ENCODE measurements at regions of chr2 and their contacts with region 1.

Region 1: DNA sequence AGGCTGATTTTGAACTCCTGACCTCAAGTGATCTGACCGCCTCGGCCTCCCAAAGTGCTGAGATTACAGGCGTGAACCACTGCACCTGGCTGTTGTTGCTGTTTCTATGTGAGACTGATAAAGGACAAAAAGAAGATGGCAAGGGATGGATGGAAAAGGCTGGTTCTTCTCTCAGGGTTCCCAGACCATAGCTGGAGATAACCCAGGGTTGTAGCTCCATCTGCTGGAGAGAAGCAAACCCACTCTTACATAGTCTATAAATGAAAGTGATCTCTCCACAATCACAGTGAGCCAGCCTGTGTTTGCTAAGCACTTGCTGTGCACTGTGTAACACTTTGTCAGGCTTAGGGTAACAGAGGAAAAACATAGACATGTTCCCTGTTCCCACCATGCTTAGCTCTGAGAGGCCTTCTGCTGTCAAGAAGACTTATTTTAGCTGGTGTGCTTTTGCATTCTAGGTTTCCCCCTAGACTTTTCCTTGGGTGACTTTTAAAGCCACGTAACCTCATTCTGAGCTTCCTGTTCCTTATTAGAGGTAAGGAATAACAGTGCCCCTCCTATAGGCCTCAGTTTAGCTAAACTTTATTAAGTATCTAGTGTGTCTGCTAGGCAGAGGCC is 49.7 kb downstream of the LIMS1 start:
- DNase-seq: peak in 8 of 9 donors; percentile 33 to 66 (median 52)
- ATAC-seq: peak; percentile 83
- H3K4me3 ChIP-seq: no peak overlapping the region
- H3K4me3 Mint-ChIP-seq: peak overlapping the region in 1 of 10 donors; percentile 32
- H3K27ac ChIP-seq: no peak overlapping the region
- H3K27ac Mint-ChIP-seq: no peak overlapping the region
- H3K4me1 ChIP-seq: peaks cover 0 to 3% of the 10 kb centered on the region in 2 donors
- H3K4me1 Mint-ChIP-seq: peaks cover 11 to 38% (median 18%) of the 10 kb centered on the region in 7 donors
- H3K27me3 ChIP-seq: no peaks in the 10 kb centered on the region
- H3K27me3 Mint-ChIP-seq: no peaks in the 10 kb centered on the region

Region 2: GRCh38 chr2:107430596-107431266 is 1153.3 kb before region 1 on chr2:
- CTCF ChIA-PET with region 1: no interaction called
- POLR2A ChIA-PET with region 1: no interaction called
- intact Hi-C with region 1: no loop called
- DNase-seq: no peak
- ATAC-seq: no peak
- H3K4me3 ChIP-seq: no peak overlapping the region
- H3K4me3 Mint-ChIP-seq: no peak overlapping the region
- H3K27ac ChIP-seq: no peak overlapping the region
- H3K27ac Mint-ChIP-seq: no peak overlapping the region
- H3K4me1 ChIP-seq: no peaks in the 10 kb centered on the region
- H3K4me1 Mint-ChIP-seq: no peaks in the 10 kb centered on the region
- H3K27me3 ChIP-seq: no peaks in the 10 kb centered on the region
- H3K27me3 Mint-ChIP-seq: no peaks in the 10 kb centered on the region

Region 3: DNA sequence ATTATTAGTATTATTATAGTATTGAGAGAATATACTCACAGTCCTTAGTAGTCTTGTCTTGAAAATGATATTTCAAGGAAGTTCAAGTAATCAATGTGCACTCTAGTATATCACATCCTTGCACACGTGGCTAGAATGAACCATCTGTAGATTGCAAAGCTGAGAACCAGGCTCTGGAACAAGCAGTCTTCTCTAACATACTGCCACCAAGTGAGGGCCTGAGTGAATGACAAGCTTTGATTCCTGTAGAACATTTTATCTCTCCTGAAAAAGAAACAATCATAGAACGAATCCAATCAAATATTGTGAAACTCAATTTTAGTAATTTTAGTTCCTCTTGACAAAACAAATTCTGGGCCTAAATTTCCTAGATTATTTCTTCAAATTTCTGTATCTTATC is 399.6 kb before region 1 on chr2:
- CTCF ChIA-PET with region 1: no interaction called
- POLR2A ChIA-PET with region 1: no interaction called
- intact Hi-C with region 1: loop called in 1 of 2 experiments (anchors 10 kb)
- DNase-seq: no peak
- ATAC-seq: no peak
- H3K4me3 ChIP-seq: no peak overlapping the region
- H3K4me3 Mint-ChIP-seq: no peak overlapping the region
- H3K27ac ChIP-seq: no peak overlapping the region
- H3K27ac Mint-ChIP-seq: no peak overlapping the region
- H3K4me1 ChIP-seq: no peaks in the 10 kb centered on the region
- H3K4me1 Mint-ChIP-seq: no peaks in the 10 kb centered on the region
- H3K27me3 ChIP-seq: no peaks in the 10 kb centered on the region
- H3K27me3 Mint-ChIP-seq: peaks cover 0 to 19% (median 6%) of the 10 kb centered on the region in 5 donors

Region 4: DNA sequence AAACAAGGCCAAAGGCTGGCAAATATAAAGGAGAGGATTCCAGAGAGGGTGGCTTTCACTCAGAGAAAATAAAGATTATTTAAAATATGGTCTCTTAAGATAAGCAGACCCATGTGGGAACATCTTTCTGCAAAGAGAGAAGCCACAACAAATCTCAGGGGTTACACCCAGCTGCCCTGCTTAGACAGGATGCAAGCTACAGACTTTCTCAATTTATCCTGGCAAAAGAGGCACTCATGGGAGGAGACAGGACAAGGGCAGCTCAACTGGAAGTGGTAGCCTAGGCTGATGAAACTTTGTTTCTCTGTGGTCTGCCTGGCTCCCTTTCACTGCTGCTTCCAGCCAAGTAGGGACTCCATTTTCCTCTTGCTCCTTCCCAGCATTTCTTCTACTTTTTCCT is 232.1 kb before region 1 on chr2:
- CTCF ChIA-PET with region 1: interaction called, 4 read pairs
- POLR2A ChIA-PET with region 1: no interaction called
- intact Hi-C with region 1: loop called in 1 of 2 experiments (anchors 1 kb)
- DNase-seq: no peak
- ATAC-seq: no peak
- H3K4me3 ChIP-seq: no peak overlapping the region
- H3K4me3 Mint-ChIP-seq: no peak overlapping the region
- H3K27ac ChIP-seq: no peak overlapping the region
- H3K27ac Mint-ChIP-seq: no peak overlapping the region
- H3K4me1 ChIP-seq: no peaks in the 10 kb centered on the region
- H3K4me1 Mint-ChIP-seq: no peaks in the 10 kb centered on the region
- H3K27me3 ChIP-seq: no peaks in the 10 kb centered on the region
- H3K27me3 Mint-ChIP-seq: peaks cover 0 to 18% (median 14%) of the 10 kb centered on the region in 5 donors

Region 5: DNA sequence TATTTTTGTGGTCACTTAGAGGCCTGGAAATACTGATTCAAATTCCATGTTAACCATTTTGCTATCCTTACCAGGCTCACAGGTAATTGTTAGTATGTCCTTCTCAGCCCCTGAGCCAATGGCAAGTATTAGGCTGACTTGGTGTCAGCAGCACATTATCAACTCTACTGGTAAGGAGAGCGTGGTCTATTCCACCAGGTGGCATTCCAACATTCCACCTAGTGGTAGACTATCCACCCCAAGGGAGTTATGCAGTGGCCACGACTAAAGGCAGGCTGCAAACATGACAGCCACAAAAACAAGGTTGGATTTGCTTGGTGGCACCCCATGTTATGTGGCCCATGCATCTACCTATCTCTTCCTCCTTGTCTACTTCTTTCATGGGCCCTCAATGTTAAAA is 166.8 kb before region 1 on chr2:
- CTCF ChIA-PET with region 1: no interaction called
- POLR2A ChIA-PET with region 1: interaction called, 3 read pairs
- intact Hi-C with region 1: loop called in 1 of 2 experiments (anchors 1 kb)
- DNase-seq: peak in 3 of 9 donors; percentile 1 to 3 (median 1)
- ATAC-seq: peak; percentile 32
- H3K4me3 ChIP-seq: no peak overlapping the region
- H3K4me3 Mint-ChIP-seq: no peak overlapping the region
- H3K27ac ChIP-seq: no peak overlapping the region
- H3K27ac Mint-ChIP-seq: no peak overlapping the region
- H3K4me1 ChIP-seq: no peaks in the 10 kb centered on the region
- H3K4me1 Mint-ChIP-seq: no peaks in the 10 kb centered on the region
- H3K27me3 ChIP-seq: no peaks in the 10 kb centered on the region
- H3K27me3 Mint-ChIP-seq: peaks cover 0 to 5% (median 2%) of the 10 kb centered on the region in 5 donors

Region 6: DNA sequence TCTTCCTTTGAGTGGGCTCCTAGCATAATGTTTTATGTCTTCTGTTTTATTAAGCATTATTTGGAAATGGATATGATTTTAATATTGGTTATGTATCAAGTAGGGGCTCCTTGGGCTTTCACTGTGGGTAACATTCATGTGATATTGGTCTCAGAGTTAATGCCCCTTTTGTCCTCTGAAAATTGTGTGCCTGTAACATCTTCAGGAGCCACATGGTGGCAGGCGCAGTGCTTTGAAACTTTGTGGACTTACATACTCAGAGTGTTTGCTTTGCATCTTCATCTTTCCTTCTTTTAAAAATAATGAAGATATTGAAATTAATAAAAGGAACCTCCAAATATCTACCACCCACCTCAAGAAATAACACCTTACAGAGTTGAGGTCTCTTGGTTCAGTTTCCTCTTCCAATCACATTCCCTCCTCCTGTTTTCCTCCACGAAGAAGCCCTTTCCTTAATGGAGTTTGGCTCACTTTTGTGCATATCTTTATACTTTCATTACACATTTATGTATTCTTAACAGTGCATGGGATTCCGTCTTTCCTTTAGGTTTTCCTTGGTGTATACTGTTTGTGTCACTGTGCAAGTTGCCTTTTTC is 23.8 kb after region 1 on chr2:
- CTCF ChIA-PET with region 1: no interaction called
- POLR2A ChIA-PET with region 1: no interaction called
- intact Hi-C with region 1: no loop called
- DNase-seq: peak in 7 of 9 donors; percentile 30 to 61 (median 53)
- ATAC-seq: peak; percentile 45
- H3K4me3 ChIP-seq: no peak overlapping the region
- H3K4me3 Mint-ChIP-seq: no peak overlapping the region
- H3K27ac ChIP-seq: no peak overlapping the region
- H3K27ac Mint-ChIP-seq: no peak overlapping the region
- H3K4me1 ChIP-seq: peaks cover 4 to 14% of the 10 kb centered on the region in 2 donors
- H3K4me1 Mint-ChIP-seq: peaks cover 20 to 68% (median 26%) of the 10 kb centered on the region in 7 donors
- H3K27me3 ChIP-seq: no peaks in the 10 kb centered on the region
- H3K27me3 Mint-ChIP-seq: no peaks in the 10 kb centered on the region